Upper lobe of right lung (tissue), 1 donor: ENCODE measurements at regions of chr7 and their contacts with region 1.

Region 1: GRCh38 chr7:322111-322671 is 32.2 kb downstream of the FOXL3 start:
- DNase-seq: peak; percentile 90
- ATAC-seq: peak; percentile 91
- H3K4me3 ChIP-seq: no peak overlapping the region
- H3K27ac ChIP-seq: no peak overlapping the region
- H3K4me1 ChIP-seq: peaks cover 12% of the 10 kb centered on the region
- H3K27me3 ChIP-seq: no peaks in the 10 kb centered on the region
- CTCF ChIP-seq: peak; percentile 91

Region 2: GRCh38 chr7:229184-229964 is 92.8 kb before region 1 on chr7:
- intact Hi-C with region 1: no loop called
- DNase-seq: no peak
- ATAC-seq: peak; percentile 31
- H3K4me3 ChIP-seq: no peak overlapping the region
- H3K27ac ChIP-seq: peak overlapping the region; percentile 30
- H3K4me1 ChIP-seq: peaks cover 17% of the 10 kb centered on the region
- H3K27me3 ChIP-seq: no peaks in the 10 kb centered on the region
- CTCF ChIP-seq: no peak

Region 3: DNA sequence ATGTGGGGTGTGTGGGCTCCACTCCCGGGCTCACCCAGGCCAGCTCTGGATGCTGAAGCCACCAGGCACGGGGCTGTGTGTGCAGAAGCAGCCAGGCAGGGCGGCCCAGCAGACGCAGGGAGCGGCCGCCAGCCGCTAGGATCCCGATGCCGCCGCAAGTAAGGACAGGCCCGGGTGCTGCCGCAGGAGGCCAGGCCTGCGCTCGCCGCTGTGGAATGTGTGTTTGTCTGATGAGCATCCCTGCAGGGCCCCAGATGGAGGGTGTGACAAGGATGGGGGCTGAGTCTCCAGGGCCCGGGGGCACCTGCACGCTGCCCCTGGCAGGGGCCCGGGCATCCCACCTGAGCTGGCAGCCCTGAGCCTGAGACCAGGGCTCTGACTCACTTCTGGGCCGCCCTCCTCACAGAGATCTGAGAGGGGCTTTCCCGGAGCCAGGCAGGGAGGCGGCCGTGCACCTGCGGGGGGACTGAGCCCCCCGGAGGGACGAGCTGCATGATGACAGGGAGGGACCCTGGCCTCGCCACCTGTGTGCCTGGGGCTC is 69.3 kb after region 1 on chr7:
- intact Hi-C with region 1: no loop called
- DNase-seq: peak; percentile 61
- ATAC-seq: no peak
- H3K4me3 ChIP-seq: no peak overlapping the region
- H3K27ac ChIP-seq: no peak overlapping the region
- H3K4me1 ChIP-seq: no peaks in the 10 kb centered on the region
- H3K27me3 ChIP-seq: no peaks in the 10 kb centered on the region
- CTCF ChIP-seq: no peak

Region 4: GRCh38 chr7:774161-775109 is 452.2 kb after region 1 on chr7:
- intact Hi-C with region 1: loop called (anchors 5 kb)
- DNase-seq: peak; percentile 77
- ATAC-seq: peak; percentile 81
- H3K4me3 ChIP-seq: no peak overlapping the region
- H3K27ac ChIP-seq: no peak overlapping the region
- H3K4me1 ChIP-seq: peaks cover 21% of the 10 kb centered on the region
- H3K27me3 ChIP-seq: no peaks in the 10 kb centered on the region
- CTCF ChIP-seq: peak; percentile 90

Region 5: DNA sequence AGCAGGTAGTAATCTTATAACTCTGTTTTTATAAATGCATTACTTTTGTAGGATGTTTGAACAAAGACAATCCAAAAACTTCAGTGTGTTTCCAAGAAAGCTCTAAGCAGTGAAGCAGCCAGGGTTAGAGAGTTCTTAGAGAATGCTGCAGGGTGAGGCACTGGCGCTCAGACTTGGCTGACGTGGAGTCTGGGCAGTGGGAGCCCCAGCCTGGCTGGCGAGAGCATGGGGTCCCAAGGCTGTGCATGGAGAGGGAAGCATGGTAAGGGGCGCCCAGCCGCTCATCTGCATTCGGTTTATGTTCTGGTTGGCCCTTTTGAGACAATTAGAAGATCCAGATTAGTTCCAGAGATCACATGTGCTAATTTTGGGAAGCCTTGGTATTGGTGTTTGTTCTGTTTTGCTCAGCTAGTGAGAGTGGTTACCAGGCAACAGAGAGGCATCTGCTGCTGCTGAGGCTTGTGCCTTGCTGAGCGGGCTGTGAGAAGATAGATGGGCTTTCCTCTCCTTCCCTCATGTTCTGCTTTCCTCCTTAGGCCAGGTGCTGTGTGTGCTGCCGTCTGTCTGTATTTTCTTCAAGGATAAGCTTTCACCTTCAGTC is 520.3 kb after region 1 on chr7:
- intact Hi-C with region 1: loop called (anchors 10 kb)
- DNase-seq: no peak
- ATAC-seq: no peak
- H3K4me3 ChIP-seq: no peak overlapping the region
- H3K27ac ChIP-seq: no peak overlapping the region
- H3K4me1 ChIP-seq: no peaks in the 10 kb centered on the region
- H3K27me3 ChIP-seq: no peaks in the 10 kb centered on the region
- CTCF ChIP-seq: no peak